PC-9 (cell line): ENCODE measurements at regions of chr7 and their contacts with region 1.

Region 1: DNA sequence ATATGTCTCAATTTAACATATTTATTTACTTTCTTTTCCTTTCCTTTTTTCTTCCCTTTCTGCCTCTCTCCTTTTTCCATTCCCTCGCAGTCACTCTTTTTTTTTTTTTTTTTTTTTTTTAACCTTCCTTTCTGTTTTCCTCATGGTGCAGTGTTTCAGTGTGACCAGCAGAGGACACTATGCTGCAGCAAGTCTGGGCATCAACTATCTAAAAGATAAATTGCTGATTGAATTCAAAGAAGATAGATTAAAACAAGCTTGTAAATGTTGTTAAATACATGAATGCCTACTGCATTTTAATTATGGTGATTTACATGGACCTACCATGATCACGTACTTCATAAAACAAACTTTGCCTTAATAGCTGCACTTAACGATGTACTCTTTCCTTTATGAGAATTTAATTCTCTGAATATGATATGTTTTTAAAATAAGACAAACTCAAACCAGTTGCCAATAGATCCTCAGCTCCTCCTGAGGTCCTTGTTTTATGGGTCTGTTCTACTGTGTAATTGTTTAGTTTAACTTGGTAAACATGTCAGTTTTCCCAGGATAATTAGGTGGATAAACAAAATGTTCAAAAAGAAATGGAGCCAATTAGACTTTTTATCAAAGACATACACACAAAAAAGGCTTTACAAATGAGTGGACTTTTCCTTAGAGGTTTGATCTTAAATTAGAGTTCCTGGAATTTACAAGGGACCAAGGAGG is 101.0 kb upstream of the AGR3 start:
- DNase-seq: peak; percentile 31 to 66
- H3K4me3 ChIP-seq: no peak overlapping the region
- H3K27ac ChIP-seq: peak overlapping the region; percentile 5; the same call in 1 of the 2 replicates
- H3K4me1 ChIP-seq: peaks cover 61% of the 10 kb centered on the region
- H3K27me3 ChIP-seq: no peaks in the 10 kb centered on the region
- CTCF ChIP-seq: peak; percentile 99

Region 2: DNA sequence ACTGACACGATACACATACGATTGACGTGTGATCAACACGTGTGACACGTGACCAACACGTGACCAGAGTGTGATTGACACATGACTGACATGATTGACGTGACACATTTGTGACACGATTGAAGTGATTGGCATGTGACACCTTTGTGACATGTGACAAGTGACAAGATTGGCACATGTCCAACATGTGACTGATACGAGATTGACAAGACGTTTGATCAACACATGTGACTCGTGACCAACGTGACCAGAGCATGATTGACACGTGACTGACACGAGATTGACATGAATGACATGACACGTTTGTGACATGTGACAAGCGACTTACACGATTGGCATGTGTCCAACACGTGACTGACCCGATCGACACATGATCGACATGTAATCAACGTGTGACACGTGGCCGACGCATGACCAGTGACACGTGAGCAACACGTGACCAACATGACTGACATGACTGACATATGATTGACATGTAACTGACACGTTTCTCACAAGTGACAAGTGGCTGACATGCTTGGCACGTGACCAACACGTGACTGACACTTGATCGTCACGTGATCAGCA is 583.4 kb before region 1 on chr7:
- CTCF ChIA-PET with region 1: no interaction called
- POLR2A ChIA-PET with region 1: no interaction called
- intact Hi-C with region 1: no loop called
- DNase-seq: no peak
- H3K4me3 ChIP-seq: no peak overlapping the region
- H3K27ac ChIP-seq: no peak overlapping the region
- H3K4me1 ChIP-seq: no peaks in the 10 kb centered on the region
- H3K27me3 ChIP-seq: no peaks in the 10 kb centered on the region
- CTCF ChIP-seq: no peak

Region 3: GRCh38 chr7:16753102-16753931 is 229.5 kb before region 1 on chr7 and contains the start of gene TSPAN13:
- CTCF ChIA-PET with region 1: interaction called, 14 read pairs
- POLR2A ChIA-PET with region 1: no interaction called
- intact Hi-C with region 1: no loop called
- DNase-seq: peak; percentile 97 to 99
- H3K4me3 ChIP-seq: peak within 1 kb of the TSS; percentile 65
- H3K27ac ChIP-seq: peak within 1 kb of the TSS; percentile 60
- H3K4me1 ChIP-seq: peaks cover 28% of the 10 kb centered on the region
- H3K27me3 ChIP-seq: no peaks in the 10 kb centered on the region
- CTCF ChIP-seq: no peak
- total RNA-seq, gene TSPAN13: 26.5 and 31.1 TPM in 2 replicates

Region 4: GRCh38 chr7:16900209-16900768 is 82.5 kb before region 1 on chr7:
- CTCF ChIA-PET with region 1: interaction called, 12 read pairs
- POLR2A ChIA-PET with region 1: no interaction called
- intact Hi-C with region 1: no loop called
- DNase-seq: peak in 1 of 2 experiments; percentile 24
- H3K4me3 ChIP-seq: no peak overlapping the region
- H3K27ac ChIP-seq: no peak overlapping the region
- H3K4me1 ChIP-seq: peaks cover 12% of the 10 kb centered on the region
- H3K27me3 ChIP-seq: no peaks in the 10 kb centered on the region
- CTCF ChIP-seq: no peak

Region 5: DNA sequence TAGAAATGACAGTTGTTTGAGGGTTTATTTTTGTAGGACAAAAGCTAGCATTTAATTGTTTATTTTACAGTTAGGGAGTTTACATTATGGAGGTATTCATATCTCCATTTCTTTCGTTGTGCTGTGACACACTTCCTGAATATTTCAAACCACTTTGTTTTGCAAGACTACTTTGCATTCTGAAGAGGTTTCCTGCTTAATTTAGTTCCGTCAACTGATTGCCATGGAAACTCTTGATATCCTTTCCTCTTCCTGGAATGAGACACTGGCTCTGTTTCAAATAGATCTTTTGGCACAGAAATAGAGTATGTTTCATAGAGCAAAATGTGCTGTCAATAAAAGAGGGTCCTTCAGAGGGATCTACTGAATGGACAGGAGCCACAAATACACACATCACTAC is 58.5 kb after region 1 on chr7:
- CTCF ChIA-PET with region 1: interaction called, 4 read pairs
- POLR2A ChIA-PET with region 1: interaction called, 18 read pairs
- intact Hi-C with region 1: no loop called
- DNase-seq: peak in 1 of 2 experiments; percentile 97
- H3K4me3 ChIP-seq: peak overlapping the region; percentile 11; the same call in 1 of the 2 replicates
- H3K27ac ChIP-seq: peak overlapping the region; percentile 97
- H3K4me1 ChIP-seq: peaks cover 83% of the 10 kb centered on the region
- H3K27me3 ChIP-seq: no peaks in the 10 kb centered on the region
- CTCF ChIP-seq: no peak

Region 6: DNA sequence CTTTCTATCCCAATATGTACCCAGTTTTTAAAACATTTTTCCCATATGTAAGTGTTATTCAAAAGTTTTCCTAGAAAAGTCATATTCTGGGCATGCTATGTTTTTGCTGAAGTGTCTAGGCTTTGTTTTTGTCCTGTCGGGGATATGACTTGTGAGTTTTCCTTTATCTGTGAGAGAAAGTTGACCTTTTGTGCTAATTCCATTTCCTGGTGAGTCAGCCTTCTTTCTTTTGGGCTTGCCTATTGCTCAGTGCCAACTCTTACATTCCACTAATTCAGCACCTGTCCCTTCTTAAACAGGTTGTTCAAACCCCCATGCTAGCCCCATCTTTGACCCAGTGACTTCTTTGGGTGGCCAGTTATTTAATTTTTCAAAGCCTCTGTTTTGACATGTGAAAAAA is 461.9 kb after region 1 on chr7:
- CTCF ChIA-PET with region 1: no interaction called
- POLR2A ChIA-PET with region 1: no interaction called
- intact Hi-C with region 1: loop called (anchors 10 kb)
- DNase-seq: peak; percentile 34 to 81
- H3K4me3 ChIP-seq: no peak overlapping the region
- H3K27ac ChIP-seq: peak overlapping the region; percentile 51
- H3K4me1 ChIP-seq: peaks cover 30% of the 10 kb centered on the region
- H3K27me3 ChIP-seq: no peaks in the 10 kb centered on the region
- CTCF ChIP-seq: no peak

Region 7: GRCh38 chr7:17680943-17681351 is 698.2 kb after region 1 on chr7:
- CTCF ChIA-PET with region 1: no interaction called
- POLR2A ChIA-PET with region 1: no interaction called
- intact Hi-C with region 1: loop called (anchors 10 kb)
- DNase-seq: peak in 1 of 2 experiments; percentile 60
- H3K4me3 ChIP-seq: no peak overlapping the region
- H3K27ac ChIP-seq: no peak overlapping the region
- H3K4me1 ChIP-seq: no peaks in the 10 kb centered on the region
- H3K27me3 ChIP-seq: no peaks in the 10 kb centered on the region
- CTCF ChIP-seq: peak; percentile 91